AG04450 (cell line): ENCODE measurements at regions of chr1 and their contacts with region 1.

Region 1: GRCh38 chr1:40315239-40315794 is 1.8 kb downstream of the COL9A2 start:
- DNase-seq: peak; percentile 70
- H3K4me3 ChIP-seq: peak overlapping the region; percentile 32; the same call in 1 of the 2 replicates
- H3K27ac ChIP-seq: peak overlapping the region; percentile 52
- H3K27me3 ChIP-seq: peaks cover 33% of the 10 kb centered on the region
- CTCF ChIP-seq: peak; percentile 91

Region 2: GRCh38 chr1:39566441-39567137 is 748.7 kb before region 1 on chr1:
- CTCF ChIA-PET with region 1: no interaction called
- POLR2A ChIA-PET with region 1: no interaction called
- DNase-seq: no peak
- H3K4me3 ChIP-seq: no peak overlapping the region
- H3K27ac ChIP-seq: no peak overlapping the region
- H3K27me3 ChIP-seq: no peaks in the 10 kb centered on the region
- CTCF ChIP-seq: no peak

Region 3: DNA sequence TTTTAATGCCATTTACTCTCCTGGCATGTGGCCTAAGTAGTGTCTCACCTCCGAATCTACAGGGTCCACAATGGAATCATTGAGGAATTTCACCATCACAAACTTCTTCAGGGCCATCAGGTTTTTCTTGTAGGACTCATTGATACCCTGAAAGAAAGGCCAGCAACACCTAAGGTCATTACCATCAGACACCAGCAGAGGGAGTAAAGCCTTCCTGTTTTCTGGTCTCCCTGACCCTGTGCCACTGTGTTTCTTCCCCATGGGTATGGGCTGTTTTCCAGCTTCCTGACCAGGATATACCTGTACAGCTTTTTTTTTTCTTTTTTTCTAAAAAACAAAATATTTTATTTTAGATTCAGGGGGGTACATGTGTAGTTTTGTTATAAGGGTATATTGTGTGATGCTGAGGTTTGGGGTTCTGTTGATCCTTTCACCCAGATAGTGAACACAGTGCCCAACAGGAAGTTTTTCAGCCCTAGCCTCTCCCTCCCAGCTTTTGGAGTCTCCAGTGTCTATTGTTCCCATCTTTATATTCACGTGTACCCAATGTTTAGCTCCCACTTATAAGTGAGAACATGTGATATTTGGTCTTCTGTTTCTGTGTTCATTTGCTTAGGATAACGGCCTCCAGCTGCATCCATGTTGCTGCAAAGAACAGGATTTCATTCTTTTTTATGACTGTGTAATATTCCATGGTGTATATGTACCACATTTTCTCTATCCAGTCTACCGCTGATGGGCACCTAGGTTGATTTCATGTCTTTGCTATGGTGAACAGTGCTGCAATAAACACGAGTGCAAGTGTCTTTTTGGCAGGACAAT is 236.6 kb before region 1 on chr1:
- CTCF ChIA-PET with region 1: interaction called, 10 read pairs
- POLR2A ChIA-PET with region 1: no interaction called
- DNase-seq: peak; percentile 13
- H3K4me3 ChIP-seq: no peak overlapping the region
- H3K27ac ChIP-seq: no peak overlapping the region
- H3K27me3 ChIP-seq: no peaks in the 10 kb centered on the region
- CTCF ChIP-seq: peak; percentile 82

Region 4: DNA sequence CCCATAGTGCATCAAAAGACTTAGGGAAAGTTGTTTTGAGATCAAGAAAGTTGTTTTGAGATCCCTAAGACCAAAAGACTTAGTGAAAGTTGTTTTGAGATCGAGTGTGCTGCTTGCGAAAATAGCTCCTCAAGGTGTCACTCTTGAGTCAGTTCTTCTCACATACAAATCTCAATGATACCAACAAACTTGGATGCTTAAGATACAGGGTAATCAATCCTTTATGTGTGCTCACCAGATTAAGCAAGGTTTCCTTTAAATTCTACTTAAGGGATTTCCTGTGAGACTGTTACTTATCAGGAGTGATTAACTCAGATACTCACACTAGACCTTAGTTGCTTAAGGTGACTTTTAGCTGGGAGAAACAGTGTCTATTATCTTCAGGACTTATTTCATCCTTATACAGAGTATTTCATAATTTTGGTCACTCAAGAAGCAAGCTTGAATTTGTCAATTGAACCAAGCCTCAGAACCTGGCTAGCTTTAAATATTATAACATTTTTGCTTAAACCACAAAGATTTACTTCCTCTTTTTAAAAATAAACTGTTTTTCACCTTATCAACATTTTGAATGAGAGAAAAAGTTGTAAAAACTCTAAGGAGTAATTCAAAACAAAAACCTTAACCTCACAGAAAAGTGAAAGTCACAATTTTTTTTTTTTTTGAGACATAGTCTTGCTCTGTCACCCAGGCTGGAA is 162.1 kb before region 1 on chr1:
- CTCF ChIA-PET with region 1: interaction called, 83 read pairs
- POLR2A ChIA-PET with region 1: no interaction called
- DNase-seq: peak; percentile 23
- H3K4me3 ChIP-seq: no peak overlapping the region
- H3K27ac ChIP-seq: no peak overlapping the region
- H3K27me3 ChIP-seq: peaks cover 2% of the 10 kb centered on the region
- CTCF ChIP-seq: peak; percentile 80

Region 5: DNA sequence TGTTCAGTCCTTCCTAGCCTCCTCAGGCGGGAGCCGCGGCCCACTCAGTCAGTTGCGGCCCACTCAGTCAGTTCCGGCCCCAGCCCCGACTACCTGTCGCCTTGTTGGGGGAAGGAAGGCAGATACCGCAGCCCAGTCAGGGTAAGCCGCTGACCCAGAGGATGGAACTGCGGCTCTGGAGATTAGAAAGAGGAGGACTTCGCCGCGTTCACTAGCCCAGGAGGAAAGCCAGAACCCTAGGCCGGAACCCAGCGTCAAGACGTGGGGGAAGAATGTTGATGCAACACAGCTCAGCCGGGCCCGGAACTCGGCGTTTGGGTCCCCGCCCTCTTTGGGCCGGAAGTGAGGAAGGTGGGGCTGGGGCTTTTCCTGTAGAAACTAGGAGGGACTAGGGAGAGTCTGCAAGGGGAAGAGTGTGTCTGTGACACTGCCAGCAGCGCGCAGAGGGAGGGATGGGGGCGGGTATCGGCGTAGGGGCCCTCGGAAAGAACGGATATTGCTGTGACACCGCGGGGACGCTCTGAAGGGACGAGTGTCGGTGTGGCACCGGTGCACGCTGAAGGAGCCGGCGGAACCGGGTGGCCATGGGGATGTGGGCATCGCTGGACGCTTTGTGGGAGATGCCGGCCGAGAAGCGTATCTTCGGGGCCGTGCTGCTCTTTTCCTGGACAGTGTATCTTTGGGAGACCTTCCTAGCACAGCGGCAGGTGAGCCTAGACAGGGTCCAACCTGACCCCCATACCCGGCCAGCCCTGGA is 57.5 kb before region 1 on chr1 and contains the start of gene ZMPSTE24:
- CTCF ChIA-PET with region 1: interaction called, 10 read pairs
- POLR2A ChIA-PET with region 1: interaction called, 6 read pairs
- DNase-seq: peak; percentile 92
- H3K4me3 ChIP-seq: peak within 1 kb of the TSS; percentile 99
- H3K27ac ChIP-seq: peak within 1 kb of the TSS; percentile 99
- H3K27me3 ChIP-seq: no peaks in the 10 kb centered on the region
- CTCF ChIP-seq: no peak
- polyA plus RNA-seq, gene ZMPSTE24: 40.1 and 55.8 TPM in 2 replicates

Region 6: GRCh38 chr1:40281853-40282252 is 33.5 kb before region 1 on chr1:
- CTCF ChIA-PET with region 1: interaction called, 17 read pairs
- POLR2A ChIA-PET with region 1: no interaction called
- DNase-seq: no peak
- H3K4me3 ChIP-seq: no peak overlapping the region
- H3K27ac ChIP-seq: no peak overlapping the region
- H3K27me3 ChIP-seq: no peaks in the 10 kb centered on the region
- CTCF ChIP-seq: no peak

Region 7: GRCh38 chr1:40299366-40300248 is 15.7 kb before region 1 on chr1:
- CTCF ChIA-PET with region 1: interaction called, 10 read pairs
- POLR2A ChIA-PET with region 1: no interaction called
- DNase-seq: no peak
- H3K4me3 ChIP-seq: no peak overlapping the region
- H3K27ac ChIP-seq: no peak overlapping the region
- H3K27me3 ChIP-seq: peaks cover 3% of the 10 kb centered on the region
- CTCF ChIP-seq: no peak

Region 8: GRCh38 chr1:40539338-40539737 is 224.0 kb after region 1 on chr1:
- CTCF ChIA-PET with region 1: no interaction called
- POLR2A ChIA-PET with region 1: no interaction called
- DNase-seq: no peak
- H3K4me3 ChIP-seq: no peak overlapping the region
- H3K27ac ChIP-seq: no peak overlapping the region
- H3K27me3 ChIP-seq: no peaks in the 10 kb centered on the region
- CTCF ChIP-seq: no peak